ENCODE measurements at regions of chr4 and their contacts with region 1.

Region 1: GRCh38 chr4:153750197-153750817 is 9.5 kb downstream of the RNF175 start:
- DNase-seq: peak; percentile 60
- CTCF ChIP-seq: peak; percentile 58

Region 2: GRCh38 chr4:153344131-153345010 is 405.9 kb before region 1 on chr4 and contains the start of gene MND1:
- CTCF ChIA-PET with region 1: interaction called, 14 read pairs
- POLR2A ChIA-PET with region 1: no interaction called
- DNase-seq: peak; percentile 93
- CTCF ChIP-seq: peak; percentile 72

Region 3: DNA sequence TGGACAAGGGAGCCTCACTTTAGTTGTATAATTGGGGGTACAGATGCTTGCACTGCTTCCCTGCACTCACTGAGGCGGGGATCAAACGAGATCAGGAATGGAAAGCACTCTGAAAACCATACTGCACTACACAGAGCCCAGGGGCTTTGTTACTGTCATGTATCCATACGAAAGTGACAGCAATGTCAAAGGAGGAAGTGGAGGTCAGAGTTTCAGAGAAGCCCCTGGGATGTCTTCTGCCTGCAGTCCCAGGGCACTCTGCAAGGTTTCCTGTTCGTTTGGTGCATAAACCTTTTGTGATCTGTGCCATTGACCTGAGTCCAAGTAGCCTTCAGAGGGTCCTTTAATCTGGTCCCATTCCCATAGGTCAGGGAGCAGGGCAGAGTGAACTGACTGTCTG is 21.6 kb before region 1 on chr4:
- CTCF ChIA-PET with region 1: interaction called, 19 read pairs
- POLR2A ChIA-PET with region 1: no interaction called
- DNase-seq: no peak
- CTCF ChIP-seq: no peak

Region 4: DNA sequence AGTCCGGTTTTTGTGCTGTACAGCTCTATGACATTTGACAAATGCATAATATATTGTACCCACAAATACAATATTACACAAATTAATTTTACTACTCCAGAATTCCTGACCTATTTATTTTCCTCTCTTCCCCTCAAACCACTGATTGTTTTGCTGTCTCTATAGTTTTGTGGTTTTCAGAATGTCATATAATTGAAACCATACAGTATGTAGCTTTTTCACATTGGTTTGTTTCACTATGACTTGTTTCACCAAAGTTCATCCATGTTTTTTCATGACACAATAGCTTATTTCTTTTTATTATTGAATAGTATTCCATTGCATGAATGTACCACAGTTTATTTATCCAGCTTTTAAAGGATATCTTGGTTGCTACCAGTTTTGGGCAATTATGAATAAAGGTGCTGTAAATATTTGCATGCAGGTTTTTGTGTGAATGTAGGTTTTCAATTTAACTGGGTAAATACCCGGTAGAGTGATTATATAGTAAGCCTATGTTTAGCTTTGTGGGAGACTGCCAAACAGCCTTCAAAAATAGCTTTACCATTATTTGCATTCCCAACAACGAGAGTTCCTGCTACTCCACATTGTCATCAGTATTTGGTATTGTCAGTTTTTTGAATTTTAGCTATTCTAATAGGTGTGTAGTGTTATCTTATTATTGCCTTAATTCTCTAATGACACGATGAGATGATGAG is 16.4 kb before region 1 on chr4:
- CTCF ChIA-PET with region 1: interaction called, 19 read pairs
- POLR2A ChIA-PET with region 1: no interaction called
- DNase-seq: no peak
- CTCF ChIP-seq: no peak

Region 5: DNA sequence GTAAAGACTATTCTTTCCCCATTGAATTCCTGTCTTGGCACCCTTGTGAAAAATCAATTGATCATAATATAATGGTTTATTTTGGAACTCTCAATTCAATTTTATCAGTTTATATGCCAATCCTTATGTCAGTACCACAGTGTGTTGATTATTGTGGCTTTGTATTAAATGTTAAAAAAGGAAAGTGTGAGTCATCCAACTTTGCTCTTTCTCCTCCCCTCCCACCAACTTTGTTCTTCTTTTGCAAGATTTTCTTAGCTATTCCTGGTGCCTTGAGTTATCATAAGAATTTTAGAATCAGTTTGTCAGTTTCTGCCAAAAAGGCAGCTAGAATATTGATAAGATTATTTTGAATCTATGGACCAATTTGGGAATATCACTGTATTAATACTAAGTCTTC is 20.7 kb after region 1 on chr4:
- CTCF ChIA-PET with region 1: no interaction called
- POLR2A ChIA-PET with region 1: no interaction called
- DNase-seq: no peak
- CTCF ChIP-seq: no peak

Measured in GM10248 (cell line).